ENCODE measurements at regions of chr11 and their contacts with region 1.

Region 1: DNA sequence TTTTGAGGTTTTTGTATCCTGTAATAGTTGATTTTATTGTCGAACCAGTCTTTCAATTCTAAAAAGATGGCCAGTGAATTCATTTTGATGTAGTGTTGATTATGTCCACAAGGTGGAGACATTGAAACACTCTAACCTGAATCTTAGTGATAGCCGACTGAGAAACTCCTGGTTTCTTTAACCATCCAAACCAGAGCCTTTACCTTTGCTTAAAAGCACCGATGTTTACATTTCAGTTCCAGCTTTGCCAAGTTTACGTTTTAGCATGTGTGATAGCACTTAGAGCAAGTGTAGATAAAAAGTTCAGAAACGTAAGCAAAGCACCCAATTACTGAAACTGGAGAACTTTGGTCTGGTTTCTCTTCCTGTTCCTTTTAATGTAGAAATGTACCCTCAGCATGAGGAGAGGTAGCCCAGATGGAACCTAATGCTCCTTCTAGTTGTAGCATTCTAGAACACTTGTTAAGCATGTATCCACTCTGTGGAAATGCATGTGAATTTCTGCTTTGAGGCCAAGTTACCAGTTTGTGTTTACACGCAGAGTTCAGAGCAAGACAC is 208.6 kb downstream of the DBX1 start:
- DNase-seq: peak; percentile 49 to 68 (median 58)
- ATAC-seq: peak; percentile 68
- H3K4me3 ChIP-seq: no peak overlapping the region
- H3K27ac ChIP-seq: no peak overlapping the region
- H3K4me1 ChIP-seq: no peaks in the 10 kb centered on the region; a peak in 2 of 5 replicates
- H3K27me3 ChIP-seq: peaks cover 21 to 22% of the 10 kb centered on the region in 2 experiments
- CTCF ChIP-seq: peak; percentile 52 to 79 (median 56)
- EP300 ChIP-seq: no peak
- POLR2A ChIP-seq: no peak
- RAD21 ChIP-seq: peak; percentile 92 to 97

Region 2: DNA sequence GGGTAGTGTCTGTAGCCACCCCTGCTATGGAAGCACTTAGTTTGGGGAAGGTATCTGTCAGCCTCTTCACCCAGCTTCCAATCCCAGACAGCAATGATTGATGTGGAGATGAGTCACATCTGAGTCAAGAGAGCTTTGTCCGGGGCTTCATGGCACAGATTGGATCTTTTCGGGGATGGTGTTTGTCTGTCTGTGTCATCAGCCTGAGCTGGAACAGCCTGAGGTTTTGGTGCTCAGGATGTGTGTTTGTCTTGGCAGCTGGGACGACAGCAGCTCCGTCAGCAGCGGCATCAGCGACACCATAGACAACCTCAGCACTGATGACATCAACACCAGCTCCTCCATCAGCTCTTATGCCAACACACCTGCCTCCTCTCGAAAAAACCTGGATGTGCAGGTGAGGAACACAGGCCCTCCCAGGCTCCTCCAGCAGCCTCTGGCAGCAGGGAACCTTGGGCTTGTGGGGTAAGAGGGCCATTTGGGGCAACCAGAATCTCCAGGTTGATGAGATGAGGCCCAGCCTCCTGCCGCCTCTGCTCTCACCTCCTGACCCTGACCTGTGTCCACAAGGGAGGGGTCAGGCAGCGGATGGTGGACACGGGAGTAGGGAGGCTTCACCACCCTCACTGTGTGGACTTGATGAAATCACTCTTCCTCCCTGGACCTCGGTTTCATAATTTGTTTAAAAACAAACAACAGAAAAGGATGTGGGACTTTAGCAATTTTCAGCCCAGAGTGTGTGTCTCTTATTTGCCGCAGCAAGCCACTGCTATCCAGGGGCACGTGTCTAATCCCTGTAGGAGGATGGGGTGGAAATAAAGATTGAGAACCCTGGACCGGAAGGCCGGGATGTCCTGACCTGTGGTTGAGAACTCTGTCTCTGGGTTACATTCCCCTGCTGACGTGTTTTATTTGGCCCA is 84.3 kb after region 1 on chr11:
- CTCF ChIA-PET with region 1: no interaction called
- POLR2A ChIA-PET with region 1: no interaction called
- in situ Hi-C with region 1: no loop called
- intact Hi-C with region 1: loop called (anchors 5 kb)
- DNase-seq: peak in 3 of 4 experiments; percentile 15 to 54 (median 40)
- ATAC-seq: peak; percentile 66
- H3K4me3 ChIP-seq: no peak overlapping the region
- H3K27ac ChIP-seq: no peak overlapping the region
- H3K4me1 ChIP-seq: no peaks in the 10 kb centered on the region; a peak in 1 of 5 replicates
- H3K27me3 ChIP-seq: peaks cover 13 to 55% of the 10 kb centered on the region in 2 experiments
- CTCF ChIP-seq: no peak
- EP300 ChIP-seq: peak; percentile 57
- POLR2A ChIP-seq: no peak
- RAD21 ChIP-seq: no peak

Region 3: DNA sequence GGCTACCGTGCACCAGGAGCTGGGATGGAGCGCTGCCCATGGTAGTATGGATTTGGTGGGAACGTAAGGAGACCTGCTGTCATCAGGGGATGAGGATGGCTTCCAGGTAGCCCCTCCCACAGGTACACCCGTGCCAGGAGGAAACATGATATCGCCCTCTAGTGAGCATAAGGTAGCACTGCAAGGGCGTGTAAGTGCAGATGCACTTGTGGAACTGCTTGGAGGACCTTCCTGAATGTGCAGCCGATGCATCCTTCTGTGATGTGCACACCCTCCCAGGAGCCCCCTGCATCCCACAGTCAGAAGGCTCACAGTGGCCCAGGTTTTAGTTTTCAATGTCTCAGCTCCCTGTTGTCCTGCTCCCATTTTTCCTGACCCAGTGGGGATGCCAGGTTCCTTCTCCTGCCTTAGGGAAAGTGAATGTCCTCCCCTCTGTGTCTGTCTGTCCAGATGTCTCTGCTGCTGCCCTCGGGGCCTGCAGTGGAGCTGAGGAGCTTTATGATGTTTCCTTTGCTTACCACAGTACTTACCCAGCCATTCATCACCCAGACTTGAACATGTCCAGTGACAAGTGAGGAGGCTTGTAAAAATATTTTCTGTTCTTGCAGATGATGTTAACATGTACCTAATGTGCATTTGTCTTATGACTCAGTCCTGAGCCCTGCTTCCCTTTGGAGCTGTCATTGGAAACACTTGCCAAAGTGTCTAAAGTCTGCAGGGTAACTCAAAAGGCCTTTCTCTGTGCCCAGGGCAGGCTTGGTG is 159.5 kb after region 1 on chr11:
- CTCF ChIA-PET with region 1: interaction called, 11 read pairs
- POLR2A ChIA-PET with region 1: no interaction called
- in situ Hi-C with region 1: no loop called
- intact Hi-C with region 1: loop called (anchors 1 kb)
- DNase-seq: peak; percentile 75 to 91 (median 87)
- ATAC-seq: peak; percentile 84
- H3K4me3 ChIP-seq: no peak overlapping the region
- H3K27ac ChIP-seq: no peak overlapping the region
- H3K4me1 ChIP-seq: peaks cover 12 to 14% of the 10 kb centered on the region in 2 experiments
- H3K27me3 ChIP-seq: no peaks in the 10 kb centered on the region
- CTCF ChIP-seq: peak; percentile 91 to 95 (median 92)
- EP300 ChIP-seq: no peak
- POLR2A ChIP-seq: no peak
- RAD21 ChIP-seq: peak; percentile 82 to 96

Region 4: GRCh38 chr11:20122131-20122530 is 170.5 kb after region 1 on chr11:
- CTCF ChIA-PET with region 1: interaction called, 3 read pairs
- POLR2A ChIA-PET with region 1: no interaction called
- in situ Hi-C with region 1: loop called (anchors 5 kb)
- intact Hi-C with region 1: no loop called
- DNase-seq: no peak
- ATAC-seq: no peak
- H3K4me3 ChIP-seq: no peak overlapping the region
- H3K27ac ChIP-seq: no peak overlapping the region; the same call in 2 of the 3 replicates
- H3K4me1 ChIP-seq: peaks cover 3 to 13% of the 10 kb centered on the region in 2 experiments; a peak in 4 of 5 replicates
- H3K27me3 ChIP-seq: peaks cover 0 to 6% of the 10 kb centered on the region in 2 experiments; a peak in 2 of 5 replicates
- CTCF ChIP-seq: no peak
- EP300 ChIP-seq: no peak
- POLR2A ChIP-seq: no peak
- RAD21 ChIP-seq: no peak

Region 5: GRCh38 chr11:20355221-20356219 is 403.9 kb after region 1 on chr11:
- CTCF ChIA-PET with region 1: interaction called, 5 read pairs
- POLR2A ChIA-PET with region 1: no interaction called
- in situ Hi-C with region 1: loop called (anchors 10 kb)
- intact Hi-C with region 1: no loop called
- DNase-seq: peak; percentile 45 to 72 (median 58)
- ATAC-seq: peak; percentile 89
- H3K4me3 ChIP-seq: no peak overlapping the region
- H3K27ac ChIP-seq: no peak overlapping the region
- H3K4me1 ChIP-seq: peaks cover 0 to 28% of the 10 kb centered on the region in 2 experiments; a peak in 4 of 5 replicates
- H3K27me3 ChIP-seq: no peaks in the 10 kb centered on the region
- CTCF ChIP-seq: peak; percentile 59 to 70 (median 64)
- EP300 ChIP-seq: no peak
- POLR2A ChIP-seq: no peak
- RAD21 ChIP-seq: peak; percentile 10 to 40; a peak in 2 of 4 replicates